MCF 10A (cell line): ENCODE measurements at regions of chrX and their contacts with region 1.

Region 1: GRCh38 chrX:41116948-41117347 is 31.7 kb downstream of the USP9X start:
- DNase-seq: no peak
- H3K4me3 Mint-ChIP-seq: peak overlapping the region; percentile 7
- H3K27ac Mint-ChIP-seq: no peak overlapping the region
- H3K4me1 Mint-ChIP-seq: peaks cover 14% of the 10 kb centered on the region
- H3K27me3 Mint-ChIP-seq: peaks cover 3% of the 10 kb centered on the region
- CTCF ChIP-seq: no peak

Region 2: DNA sequence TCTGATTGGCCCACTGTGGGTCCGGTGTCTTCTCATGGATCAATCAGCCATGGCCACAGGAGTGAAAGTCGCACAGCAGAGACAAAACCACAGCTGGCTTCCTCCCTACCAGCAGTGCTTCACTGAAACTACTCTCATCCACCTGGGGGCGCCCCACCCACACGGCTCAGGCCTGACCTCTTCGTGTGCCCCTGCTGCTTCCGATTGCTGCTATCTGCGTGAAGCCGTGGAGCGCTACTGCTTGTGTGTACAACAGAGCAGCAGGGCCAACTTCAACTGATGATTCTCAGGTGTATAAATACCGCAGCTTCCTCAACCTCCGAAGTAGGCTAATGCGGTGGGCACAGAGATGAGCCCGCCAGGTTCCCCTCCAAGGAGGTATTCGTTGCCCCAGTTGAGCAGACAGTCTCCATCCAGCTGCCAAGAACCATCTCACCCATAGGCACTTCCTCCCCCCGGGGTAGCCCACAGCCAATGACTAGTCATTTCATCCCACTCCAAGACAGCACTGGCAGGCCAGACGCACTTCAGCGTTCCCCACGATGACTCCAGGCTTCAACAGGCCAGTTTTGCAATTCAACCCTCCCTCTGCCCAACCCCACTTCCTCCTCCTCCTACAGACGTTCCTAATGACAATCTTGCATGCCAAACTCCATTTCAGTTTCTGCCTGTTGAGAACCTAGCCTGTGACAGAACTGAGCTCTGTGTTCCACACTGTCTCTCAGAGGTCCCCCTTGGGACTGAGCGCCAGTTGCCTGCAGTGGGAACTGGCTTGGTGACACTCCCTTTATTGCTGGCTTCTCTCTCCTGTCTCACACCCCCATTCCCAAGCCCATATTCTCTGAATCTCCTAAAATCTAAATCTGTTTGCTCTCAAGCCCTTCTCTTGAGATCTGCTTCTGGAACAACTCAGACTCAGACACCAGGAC is 577.5 kb before region 1 on chrX:
- CTCF ChIA-PET with region 1: interaction called, 11 read pairs
- POLR2A ChIA-PET with region 1: no interaction called
- intact Hi-C with region 1: loop called (anchors 10 kb)
- DNase-seq: peak; percentile 27
- H3K4me3 Mint-ChIP-seq: no peak overlapping the region
- H3K27ac Mint-ChIP-seq: no peak overlapping the region
- H3K4me1 Mint-ChIP-seq: peaks cover 7% of the 10 kb centered on the region
- H3K27me3 Mint-ChIP-seq: peaks cover 86% of the 10 kb centered on the region
- CTCF ChIP-seq: no peak

Region 3: DNA sequence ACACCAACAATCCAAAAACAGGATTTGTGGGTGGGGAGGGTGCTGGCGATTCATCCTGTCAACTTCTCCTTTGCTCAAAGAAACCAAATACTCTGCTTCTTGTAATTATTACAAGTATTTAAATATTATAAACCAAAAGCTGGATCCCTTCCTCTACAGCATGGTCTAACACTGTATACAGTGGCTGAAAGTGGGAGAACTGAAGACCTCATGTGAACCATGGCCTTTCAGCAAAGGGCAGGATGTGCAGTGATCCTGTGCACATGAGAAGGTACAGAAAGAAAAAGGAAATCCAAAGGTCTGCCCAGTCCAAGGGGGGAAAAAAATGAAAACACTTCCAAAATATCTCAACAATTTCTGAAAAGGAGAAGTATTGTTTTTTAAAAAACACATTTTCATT is 464.3 kb before region 1 on chrX:
- CTCF ChIA-PET with region 1: interaction called, 21 read pairs
- POLR2A ChIA-PET with region 1: no interaction called
- intact Hi-C with region 1: loop called (anchors 1 kb)
- DNase-seq: no peak
- H3K4me3 Mint-ChIP-seq: no peak overlapping the region
- H3K27ac Mint-ChIP-seq: no peak overlapping the region
- H3K4me1 Mint-ChIP-seq: no peaks in the 10 kb centered on the region
- H3K27me3 Mint-ChIP-seq: peaks cover 17% of the 10 kb centered on the region
- CTCF ChIP-seq: no peak

Region 4: GRCh38 chrX:40792433-40792832 is 324.5 kb before region 1 on chrX:
- CTCF ChIA-PET with region 1: interaction called, 3 read pairs
- POLR2A ChIA-PET with region 1: no interaction called
- intact Hi-C with region 1: loop called (anchors 5 kb)
- DNase-seq: no peak
- H3K4me3 Mint-ChIP-seq: no peak overlapping the region
- H3K27ac Mint-ChIP-seq: no peak overlapping the region
- H3K4me1 Mint-ChIP-seq: peaks cover 9% of the 10 kb centered on the region
- H3K27me3 Mint-ChIP-seq: peaks cover 77% of the 10 kb centered on the region
- CTCF ChIP-seq: no peak

Region 5: DNA sequence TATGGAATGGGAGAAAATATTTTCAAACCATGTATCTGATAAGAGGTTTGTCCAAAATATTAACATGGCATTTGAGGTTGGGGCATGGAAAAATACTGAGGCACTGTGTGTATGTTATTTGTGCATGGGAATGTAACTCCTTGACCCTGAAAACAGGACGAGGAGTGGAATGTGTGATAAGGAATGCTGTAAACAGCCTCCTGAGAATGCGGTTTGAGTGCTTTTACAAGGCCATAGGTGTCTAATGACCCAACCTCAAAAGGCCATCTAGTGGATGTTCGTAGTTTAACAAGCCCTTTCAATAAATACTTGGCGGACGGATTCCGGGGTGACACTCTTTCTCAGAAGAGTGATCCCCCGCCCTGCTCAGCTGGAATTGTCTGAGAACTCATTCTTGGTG is 194.6 kb before region 1 on chrX:
- CTCF ChIA-PET with region 1: interaction called, 4 read pairs
- POLR2A ChIA-PET with region 1: no interaction called
- intact Hi-C with region 1: loop called (anchors 10 kb)
- DNase-seq: peak; percentile 69
- H3K4me3 Mint-ChIP-seq: no peak overlapping the region
- H3K27ac Mint-ChIP-seq: no peak overlapping the region
- H3K4me1 Mint-ChIP-seq: no peaks in the 10 kb centered on the region
- H3K27me3 Mint-ChIP-seq: peaks cover 72% of the 10 kb centered on the region
- CTCF ChIP-seq: peak; percentile 38

Region 6: GRCh38 chrX:41084044-41084892 is 32.7 kb before region 1 on chrX:
- CTCF ChIA-PET with region 1: interaction called, 4 read pairs
- POLR2A ChIA-PET with region 1: interaction called, 14 read pairs
- intact Hi-C with region 1: no loop called
- DNase-seq: peak; percentile 98
- H3K4me3 Mint-ChIP-seq: peak overlapping the region; percentile 95
- H3K27ac Mint-ChIP-seq: peak overlapping the region; percentile 99
- H3K4me1 Mint-ChIP-seq: peaks cover 6% of the 10 kb centered on the region
- H3K27me3 Mint-ChIP-seq: peaks cover 17% of the 10 kb centered on the region
- CTCF ChIP-seq: no peak

Region 7: GRCh38 chrX:41105005-41105404 is 11.9 kb before region 1 on chrX:
- CTCF ChIA-PET with region 1: interaction called, 21 read pairs
- POLR2A ChIA-PET with region 1: interaction called, 3 read pairs
- intact Hi-C with region 1: no loop called
- DNase-seq: no peak
- H3K4me3 Mint-ChIP-seq: no peak overlapping the region
- H3K27ac Mint-ChIP-seq: no peak overlapping the region
- H3K4me1 Mint-ChIP-seq: no peaks in the 10 kb centered on the region
- H3K27me3 Mint-ChIP-seq: peaks cover 3% of the 10 kb centered on the region
- CTCF ChIP-seq: no peak

Region 8: DNA sequence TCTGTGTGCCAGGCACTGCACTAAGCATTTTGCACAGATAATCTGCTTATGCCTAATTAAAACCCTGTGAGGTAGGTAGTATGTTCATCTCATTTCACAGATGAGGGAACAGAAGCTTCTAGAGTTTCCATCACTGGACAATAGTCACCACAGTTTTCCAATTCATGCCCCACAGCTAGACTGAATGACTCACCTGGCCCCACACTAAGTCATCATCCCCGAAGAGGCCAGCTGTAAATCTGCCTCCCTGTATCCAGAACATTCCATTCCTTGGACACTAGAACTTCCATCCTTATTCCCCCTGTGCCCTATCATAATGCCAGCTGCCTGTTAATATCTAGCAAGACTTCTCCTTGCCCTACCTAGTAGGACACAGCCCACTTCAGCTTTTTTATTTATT is 289.3 kb after region 1 on chrX:
- CTCF ChIA-PET with region 1: no interaction called
- POLR2A ChIA-PET with region 1: no interaction called
- intact Hi-C with region 1: no loop called
- DNase-seq: peak; percentile 58
- H3K4me3 Mint-ChIP-seq: no peak overlapping the region
- H3K27ac Mint-ChIP-seq: no peak overlapping the region
- H3K4me1 Mint-ChIP-seq: peaks cover 6% of the 10 kb centered on the region
- H3K27me3 Mint-ChIP-seq: peaks cover 22% of the 10 kb centered on the region
- CTCF ChIP-seq: no peak